Heart right ventricle (tissue), 16 donors: ENCODE measurements at regions of chr1 and their contacts with region 1.

Region 1: GRCh38 chr1:108897865-108898720 is 21.3 kb downstream of the GPSM2 start:
- DNase-seq: peak in 1 of 2 donors; percentile 42
- ATAC-seq: peak in 6 of 8 donors; percentile 29 to 78 (median 68)
- H3K4me3 ChIP-seq: no peak overlapping the region
- H3K27ac ChIP-seq: no peak overlapping the region
- H3K4me1 ChIP-seq: no peaks in the 10 kb centered on the region
- H3K27me3 ChIP-seq: no peaks in the 10 kb centered on the region
- CTCF ChIP-seq: peak; percentile 51 to 89 (median 79)

Region 2: DNA sequence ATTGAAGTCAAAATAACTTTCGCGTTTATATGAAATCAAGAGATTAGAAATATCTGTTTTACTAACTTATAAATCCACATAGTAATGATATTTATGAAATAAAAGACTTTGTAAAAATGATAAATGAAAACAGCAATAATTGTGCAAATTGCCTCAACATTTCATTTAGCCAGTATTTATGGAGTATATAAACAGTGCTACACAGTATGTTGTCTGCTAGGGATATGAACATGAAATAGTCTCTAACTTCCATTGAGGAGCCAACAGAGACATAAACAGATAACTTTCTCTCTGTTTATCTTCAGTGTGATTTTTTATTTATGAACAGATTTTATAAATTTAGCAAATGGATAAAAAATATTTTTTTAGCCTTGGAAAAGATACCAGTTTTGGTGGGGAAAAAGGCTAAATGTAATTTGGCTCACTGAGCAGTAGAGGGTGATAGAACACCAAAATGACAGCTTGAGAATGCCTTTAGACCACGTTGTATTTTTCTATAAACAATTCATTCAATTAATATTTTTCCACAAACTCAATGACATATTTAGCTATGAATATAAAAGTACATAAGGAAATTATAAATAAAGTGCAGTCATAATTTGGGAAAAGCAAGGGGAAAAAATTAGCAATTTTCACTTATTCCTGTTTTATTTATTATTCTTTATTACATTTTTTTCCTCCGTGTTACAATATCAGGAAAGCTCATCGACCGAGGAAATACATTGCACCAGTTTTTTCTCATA is 385.7 kb before region 1 on chr1:
- intact Hi-C with region 1: loop called in 1 of 10 experiments (anchors 5 kb)
- DNase-seq: no peak
- ATAC-seq: peak in 3 of 8 donors; percentile 61 to 73 (median 72)
- H3K4me3 ChIP-seq: no peak overlapping the region
- H3K27ac ChIP-seq: no peak overlapping the region
- H3K4me1 ChIP-seq: no peaks in the 10 kb centered on the region
- H3K27me3 ChIP-seq: no peaks in the 10 kb centered on the region
- CTCF ChIP-seq: peak; percentile 73 to 95 (median 91)

Region 3: GRCh38 chr1:108746372-108747205 is 151.5 kb before region 1 on chr1 and contains the start of gene STXBP3:
- intact Hi-C with region 1: loop called in 1 of 10 experiments (anchors 5 kb)
- DNase-seq: peak; percentile 98 to 100
- ATAC-seq: peak; percentile 96 to 99 (median 98)
- H3K4me3 ChIP-seq: peak within 1 kb of the TSS; percentile 58 to 94 (median 82)
- H3K27ac ChIP-seq: peak within 1 kb of the TSS; percentile 86 to 99 (median 96)
- H3K4me1 ChIP-seq: peaks cover 0 to 25% (median 15%) of the 10 kb centered on the region in 9 donors
- H3K27me3 ChIP-seq: no peaks in the 10 kb centered on the region
- CTCF ChIP-seq: peak; percentile 85 to 99 (median 96)
- total RNA-seq, gene STXBP3: 18.1 to 34.4 (median 22.9) TPM

Region 4: GRCh38 chr1:108758796-108759195 is 139.3 kb before region 1 on chr1:
- intact Hi-C with region 1: loop called in 1 of 10 experiments (anchors 5 kb)
- DNase-seq: no peak
- ATAC-seq: no peak
- H3K4me3 ChIP-seq: no peak overlapping the region
- H3K27ac ChIP-seq: no peak overlapping the region
- H3K4me1 ChIP-seq: no peaks in the 10 kb centered on the region
- H3K27me3 ChIP-seq: no peaks in the 10 kb centered on the region
- CTCF ChIP-seq: no peak

Region 5: GRCh38 chr1:108828022-108828961 is 69.8 kb before region 1 on chr1:
- intact Hi-C with region 1: loop called (anchors 1 to 5 kb)
- DNase-seq: peak; percentile 73 to 82
- ATAC-seq: peak; percentile 57 to 80 (median 70)
- H3K4me3 ChIP-seq: no peak overlapping the region
- H3K27ac ChIP-seq: peak overlapping the region in 8 of 10 donors; percentile 32 to 54 (median 40)
- H3K4me1 ChIP-seq: peaks cover 0 to 39% (median 24%) of the 10 kb centered on the region in 9 donors
- H3K27me3 ChIP-seq: no peaks in the 10 kb centered on the region
- CTCF ChIP-seq: peak; percentile 59 to 90 (median 82)